Adrenal gland (tissue), 19 donors: ENCODE measurements at regions of chr12 and their contacts with region 1.

Region 1: GRCh38 chr12:12791756-12792369 is 6.4 kb downstream of the APOLD1 start:
- DNase-seq: peak in 2 of 7 donors; percentile 6 to 14
- H3K4me3 ChIP-seq: no peak overlapping the region
- H3K27ac ChIP-seq: no peak overlapping the region
- H3K4me1 ChIP-seq: peaks cover 13 to 17% of the 10 kb centered on the region in 2 donors
- H3K27me3 ChIP-seq: no peaks in the 10 kb centered on the region
- CTCF ChIP-seq: no peak
- POLR2A ChIP-seq: no peak

Region 2: DNA sequence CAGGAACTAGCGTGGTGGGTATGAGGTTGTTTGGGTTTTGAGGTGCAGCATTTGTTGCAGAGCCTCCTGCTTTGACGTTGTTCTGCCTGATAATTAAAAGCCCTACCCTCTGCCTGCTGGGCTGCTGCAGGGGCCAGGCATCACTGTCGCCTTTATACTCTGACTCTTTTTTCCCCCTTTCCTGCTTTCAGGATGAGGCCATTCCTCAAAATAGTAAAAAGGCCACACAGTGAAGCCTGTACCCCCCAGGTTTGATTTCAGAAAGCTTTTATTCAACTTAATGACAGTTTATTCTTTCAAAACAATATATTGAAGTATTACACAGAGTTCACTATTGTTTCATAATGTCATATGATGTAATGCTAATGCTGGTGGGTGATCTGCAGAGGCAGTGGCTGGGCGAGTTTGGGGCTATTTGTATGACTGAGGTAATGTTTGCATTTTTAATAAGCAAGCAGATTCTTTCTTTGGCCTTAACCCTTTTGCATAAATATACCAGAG is 425.9 kb before region 1 on chr12:
- intact Hi-C with region 1: no loop called
- DNase-seq: no peak
- H3K4me3 ChIP-seq: no peak overlapping the region
- H3K27ac ChIP-seq: peak overlapping the region in 1 of 5 donors; percentile 23
- H3K4me1 ChIP-seq: no peaks in the 10 kb centered on the region
- H3K27me3 ChIP-seq: no peaks in the 10 kb centered on the region
- CTCF ChIP-seq: no peak
- POLR2A ChIP-seq: no peak

Region 3: GRCh38 chr12:12992418-12993130 is 200.7 kb after region 1 on chr12:
- intact Hi-C with region 1: no loop called
- DNase-seq: peak; percentile 70 to 91 (median 89)
- H3K4me3 ChIP-seq: peak overlapping the region in 2 of 4 donors; percentile 6 to 35
- H3K27ac ChIP-seq: peak overlapping the region; percentile 80 to 92 (median 84)
- H3K4me1 ChIP-seq: peaks cover 46 to 57% of the 10 kb centered on the region in 2 donors
- H3K27me3 ChIP-seq: no peaks in the 10 kb centered on the region
- CTCF ChIP-seq: no peak
- POLR2A ChIP-seq: peak in 1 of 2 donors; percentile 75

Region 4: GRCh38 chr12:13211859-13212664 is 420.2 kb after region 1 on chr12:
- intact Hi-C with region 1: loop called in 1 of 2 experiments (anchors 5 kb)
- DNase-seq: peak; percentile 60 to 89 (median 71)
- H3K4me3 ChIP-seq: no peak overlapping the region
- H3K27ac ChIP-seq: no peak overlapping the region
- H3K4me1 ChIP-seq: peaks cover 0 to 39% of the 10 kb centered on the region in 2 donors
- H3K27me3 ChIP-seq: no peaks in the 10 kb centered on the region
- CTCF ChIP-seq: peak; percentile 70 to 87 (median 77)
- POLR2A ChIP-seq: no peak